Activated T-helper 1 cell treated with anti-CD3 and anti-CD28 coated beads, Interleukin-12 subunit alpha, Interleukin-12 subunit beta, Interleukin-2, Interleukin-4 antibody, amounts not matched to agents 30 ng/mL and 10 ng/mL and 1 ng/mL, durations not matched to agents 14 hours and 24 hours and 36 hours (primary cell): ENCODE measurements at regions of chr1 and their contacts with region 1.

Region 1: GRCh38 chr1:161792740-161793139 is 26.6 kb downstream of the ATF6 start:
- DNase-seq: no peak
- H3K4me3 Mint-ChIP-seq: no peak overlapping the region
- H3K27ac Mint-ChIP-seq: no peak overlapping the region
- H3K4me1 Mint-ChIP-seq: peaks cover 22% of the 10 kb centered on the region
- H3K27me3 Mint-ChIP-seq: no peaks in the 10 kb centered on the region

Region 2: GRCh38 chr1:161691846-161692245 is 100.9 kb before region 1 on chr1:
- intact Hi-C with region 1: no loop called
- DNase-seq: no peak
- H3K4me3 Mint-ChIP-seq: no peak overlapping the region
- H3K27ac Mint-ChIP-seq: no peak overlapping the region
- H3K4me1 Mint-ChIP-seq: no peaks in the 10 kb centered on the region
- H3K27me3 Mint-ChIP-seq: peaks cover 28% of the 10 kb centered on the region

Region 3: DNA sequence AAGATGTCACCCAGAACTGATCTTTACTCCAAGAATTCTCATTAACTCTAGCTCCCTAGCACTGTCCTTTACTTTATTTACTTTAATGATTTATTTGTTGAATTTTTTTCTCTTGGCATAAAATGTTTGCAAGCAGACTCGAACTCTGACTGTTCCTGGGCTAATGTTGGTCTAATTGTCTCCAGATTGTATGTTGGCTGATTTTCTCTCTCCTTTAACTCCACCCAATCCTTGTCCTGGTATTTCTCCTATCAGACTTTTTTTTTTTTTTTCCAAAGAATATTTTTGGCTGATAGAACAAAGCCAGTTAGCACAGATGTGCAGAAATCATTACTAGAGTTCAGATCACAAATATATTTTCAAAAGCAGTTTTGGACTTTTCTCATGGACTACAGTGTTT is 55.9 kb after region 1 on chr1:
- intact Hi-C with region 1: loop called (anchors 1 kb)
- DNase-seq: no peak
- H3K4me3 Mint-ChIP-seq: no peak overlapping the region
- H3K27ac Mint-ChIP-seq: no peak overlapping the region
- H3K4me1 Mint-ChIP-seq: peaks cover 19% of the 10 kb centered on the region
- H3K27me3 Mint-ChIP-seq: no peaks in the 10 kb centered on the region

Region 4: GRCh38 chr1:161905269-161905884 is 112.6 kb after region 1 on chr1:
- intact Hi-C with region 1: loop called (anchors 1 kb)
- DNase-seq: no peak
- H3K4me3 Mint-ChIP-seq: no peak overlapping the region
- H3K27ac Mint-ChIP-seq: no peak overlapping the region
- H3K4me1 Mint-ChIP-seq: no peaks in the 10 kb centered on the region
- H3K27me3 Mint-ChIP-seq: no peaks in the 10 kb centered on the region

Region 5: GRCh38 chr1:161962091-161962887 is 169.5 kb after region 1 on chr1:
- intact Hi-C with region 1: loop called (anchors 1 kb)
- DNase-seq: peak; percentile 5
- H3K4me3 Mint-ChIP-seq: peak overlapping the region; percentile 77
- H3K27ac Mint-ChIP-seq: peak overlapping the region; percentile 89
- H3K4me1 Mint-ChIP-seq: peaks cover 19% of the 10 kb centered on the region
- H3K27me3 Mint-ChIP-seq: no peaks in the 10 kb centered on the region

Region 6: DNA sequence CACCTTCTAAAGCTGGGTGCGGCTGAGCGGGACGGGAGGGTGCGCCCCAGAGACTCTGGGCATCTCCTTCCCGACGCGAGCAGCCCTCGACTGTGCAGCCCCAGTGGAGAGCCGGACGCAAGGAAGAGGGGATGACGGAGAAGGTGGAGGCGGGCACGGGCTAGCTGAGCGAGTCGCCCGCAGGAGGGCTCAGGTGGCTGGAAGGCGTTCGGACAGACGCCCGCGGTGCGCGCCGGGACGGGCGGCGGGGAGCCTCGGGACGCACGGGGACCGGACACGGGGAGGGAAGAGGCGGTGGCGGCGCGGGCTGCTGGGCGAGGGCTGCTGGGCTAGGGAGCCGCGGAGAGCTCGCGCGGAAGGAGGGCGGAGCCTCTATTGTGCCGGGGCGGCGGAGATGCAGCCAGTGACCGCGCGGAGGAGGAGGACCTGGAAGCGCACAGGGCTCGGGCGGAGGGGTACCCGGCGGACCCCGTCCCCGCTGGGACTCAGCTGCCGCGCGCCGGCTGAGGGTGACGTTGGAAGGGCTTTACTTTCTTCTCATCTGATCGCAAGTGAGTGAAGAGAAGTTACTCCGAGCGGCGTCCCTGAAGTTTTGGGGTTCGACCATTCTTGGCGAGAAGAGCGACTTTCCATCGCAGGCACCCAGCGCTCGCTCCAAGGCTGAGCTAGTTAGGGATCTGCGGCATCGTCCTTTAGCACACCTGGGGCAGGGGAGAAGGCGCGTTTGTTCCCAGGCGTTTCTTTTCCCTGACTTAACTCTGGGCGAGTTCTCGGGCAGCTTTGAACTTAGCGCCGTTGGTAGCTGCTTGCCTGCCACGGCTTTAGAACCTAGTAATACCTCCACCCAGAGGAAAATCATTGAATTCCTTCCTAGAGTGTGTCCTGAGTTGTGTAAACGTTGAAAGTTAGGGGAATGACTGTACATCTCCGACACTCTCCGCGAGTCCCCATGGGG is 231.1 kb after region 1 on chr1 and contains the start of gene OLFML2B:
- intact Hi-C with region 1: loop called (anchors 1 kb)
- DNase-seq: peak; percentile 47
- H3K4me3 Mint-ChIP-seq: peak within 1 kb of the TSS; percentile 89
- H3K27ac Mint-ChIP-seq: peak within 1 kb of the TSS; percentile 41
- H3K4me1 Mint-ChIP-seq: peaks cover 7% of the 10 kb centered on the region
- H3K27me3 Mint-ChIP-seq: peaks cover 50% of the 10 kb centered on the region
- total RNA-seq, gene OLFML2B: not detected in 2 replicates

Region 7: DNA sequence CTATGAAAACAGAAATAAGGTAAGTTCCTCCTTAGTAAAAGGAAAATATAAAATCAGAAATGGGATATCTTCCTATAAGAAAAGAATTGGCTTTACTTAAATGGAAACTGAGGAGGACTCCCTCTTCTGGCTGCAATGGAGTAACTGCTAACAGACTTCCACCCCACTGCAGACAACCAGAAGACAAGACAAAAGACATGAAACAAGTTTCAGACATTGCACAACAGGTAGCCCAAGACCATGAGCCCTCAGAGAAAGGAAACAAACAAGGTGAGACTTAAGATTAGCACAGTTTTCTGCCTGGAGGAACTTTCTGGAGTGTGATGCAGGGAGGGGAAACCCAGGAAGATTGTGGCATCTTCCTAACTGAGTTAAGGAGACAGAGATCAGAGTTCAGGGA is 247.9 kb after region 1 on chr1:
- intact Hi-C with region 1: loop called (anchors 1 kb)
- DNase-seq: no peak
- H3K4me3 Mint-ChIP-seq: no peak overlapping the region
- H3K27ac Mint-ChIP-seq: no peak overlapping the region
- H3K4me1 Mint-ChIP-seq: no peaks in the 10 kb centered on the region
- H3K27me3 Mint-ChIP-seq: peaks cover 7% of the 10 kb centered on the region

Region 8: DNA sequence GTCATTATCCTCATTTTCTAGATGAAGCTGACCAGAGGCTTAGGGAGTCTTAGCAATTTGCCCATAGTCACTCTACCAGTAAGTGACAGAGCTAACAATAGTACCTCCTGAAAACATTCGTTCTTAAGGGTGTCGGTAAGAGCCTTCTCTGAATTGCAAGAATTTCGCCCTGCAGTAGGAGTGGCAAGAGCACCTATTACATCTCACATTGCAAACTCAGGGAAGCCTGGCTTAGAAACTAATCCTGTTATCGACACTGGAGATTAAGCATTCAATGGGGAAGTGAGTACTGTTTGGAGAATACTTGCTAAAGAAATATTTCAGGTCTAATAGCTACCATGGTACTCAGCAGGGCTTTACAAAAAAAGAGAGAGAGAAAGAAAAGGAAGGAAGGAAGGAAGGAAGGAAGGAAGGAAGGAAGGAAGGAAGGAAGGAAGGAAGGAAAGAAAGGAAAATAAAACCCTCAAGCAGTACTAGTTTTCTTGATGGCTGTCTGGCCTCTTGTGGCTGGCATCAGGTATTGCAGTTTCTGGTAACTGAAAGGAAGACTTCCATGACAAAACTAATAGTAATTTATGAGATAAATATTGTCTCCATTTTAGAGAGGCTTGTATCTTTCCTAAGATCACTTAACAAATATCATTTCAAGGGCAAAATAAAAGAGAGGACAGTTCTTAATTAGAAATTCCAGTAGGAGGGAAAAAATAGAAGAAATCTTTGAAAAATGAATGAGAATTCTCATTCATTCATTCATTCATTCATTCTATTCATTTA is 599.2 kb after region 1 on chr1:
- intact Hi-C with region 1: loop called (anchors 5 kb)
- DNase-seq: no peak
- H3K4me3 Mint-ChIP-seq: no peak overlapping the region
- H3K27ac Mint-ChIP-seq: no peak overlapping the region
- H3K4me1 Mint-ChIP-seq: no peaks in the 10 kb centered on the region
- H3K27me3 Mint-ChIP-seq: peaks cover 9% of the 10 kb centered on the region